Activated CD4-positive, alpha-beta T cell treated with anti-CD3 and anti-CD28 coated beads for 36 hours (primary cell): ENCODE measurements at regions of chr12 and their contacts with region 1.

Region 1: GRCh38 chr12:110543252-110543959 is 39.7 kb downstream of the PPTC7 start:
- DNase-seq: peak; percentile 18
- ATAC-seq: peak; percentile 39
- H3K4me3 Mint-ChIP-seq: no peak overlapping the region
- H3K27ac Mint-ChIP-seq: peak overlapping the region; percentile 69
- H3K4me1 Mint-ChIP-seq: peaks cover 46% of the 10 kb centered on the region
- H3K27me3 Mint-ChIP-seq: no peaks in the 10 kb centered on the region

Region 2: GRCh38 chr12:110531741-110532333 is 11.6 kb before region 1 on chr12:
- CTCF ChIA-PET with region 1: interaction called, 13 read pairs
- POLR2A ChIA-PET with region 1: no interaction called
- intact Hi-C with region 1: no loop called
- DNase-seq: no peak
- ATAC-seq: peak; percentile 77
- H3K4me3 Mint-ChIP-seq: no peak overlapping the region
- H3K27ac Mint-ChIP-seq: peak overlapping the region; percentile 56
- H3K4me1 Mint-ChIP-seq: peaks cover 24% of the 10 kb centered on the region
- H3K27me3 Mint-ChIP-seq: no peaks in the 10 kb centered on the region